Activated CD8-positive, alpha-beta T cell treated with anti-CD3 and anti-CD28 coated beads, Interleukin-2, amount 10 ng/mL, durations not matched to agents 7 days and 5 days (primary cell): ENCODE measurements at regions of chr7 and their contacts with region 1.

Region 1: DNA sequence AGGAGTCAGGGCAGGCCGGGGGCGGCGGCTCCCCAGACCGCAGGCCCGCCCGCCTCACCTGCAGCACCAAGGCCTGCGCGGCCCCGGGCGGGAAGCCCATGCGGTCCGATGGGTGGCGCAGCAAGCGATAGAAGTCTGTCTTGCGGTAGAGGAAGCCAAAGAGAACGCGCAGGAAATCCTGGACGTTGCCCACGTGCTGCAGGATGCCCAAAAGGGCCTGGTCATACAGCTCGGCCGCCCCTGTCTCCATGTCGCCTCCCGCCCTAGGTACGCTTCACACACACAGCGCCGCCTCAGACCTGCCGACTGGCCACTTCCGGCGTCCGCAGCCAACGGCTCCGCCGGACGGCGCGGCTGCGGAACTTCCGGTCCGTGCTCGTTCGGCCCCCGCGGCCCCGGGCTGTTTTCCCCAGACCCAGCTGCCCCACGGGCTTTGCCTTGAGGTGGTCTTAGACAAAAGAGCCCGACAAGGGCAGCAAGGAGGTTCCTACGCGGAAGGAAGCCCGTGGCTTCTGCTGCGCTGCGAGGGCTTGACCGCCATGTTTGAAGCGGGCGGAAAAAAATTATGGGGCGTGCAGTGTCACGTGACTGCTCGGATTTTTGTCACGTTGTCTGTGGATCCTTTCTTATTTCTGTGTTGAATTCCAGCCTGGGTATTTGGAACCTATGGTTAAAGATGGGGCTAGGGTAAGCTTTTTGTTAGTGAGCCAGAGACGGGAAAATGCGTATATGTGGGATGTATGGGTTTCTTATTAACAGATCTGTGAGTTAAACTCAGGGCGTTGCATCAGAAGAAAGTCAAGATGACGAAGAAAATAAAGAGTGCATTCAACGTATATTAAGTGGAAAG is at the start of gene NUDCD3:
- DNase-seq: peak; percentile 89
- ATAC-seq: peak; percentile 84
- H3K4me3 Mint-ChIP-seq: peak within 1 kb of the TSS; percentile 82
- H3K27ac Mint-ChIP-seq: peak within 1 kb of the TSS; percentile 94
- H3K4me1 Mint-ChIP-seq: peaks cover 38% of the 10 kb centered on the region
- H3K27me3 Mint-ChIP-seq: peaks cover 8% of the 10 kb centered on the region
- total RNA-seq, gene NUDCD3: 80.7 to 84.0 TPM

Region 2: GRCh38 chr7:44383566-44383965 is 107.0 kb before region 1 on chr7:
- CTCF ChIA-PET with region 1: no interaction called
- POLR2A ChIA-PET with region 1: no interaction called
- DNase-seq: peak; percentile 14
- ATAC-seq: no peak
- H3K4me3 Mint-ChIP-seq: no peak overlapping the region
- H3K27ac Mint-ChIP-seq: no peak overlapping the region
- H3K4me1 Mint-ChIP-seq: peaks cover 3% of the 10 kb centered on the region
- H3K27me3 Mint-ChIP-seq: no peaks in the 10 kb centered on the region

Region 3: GRCh38 chr7:44460325-44460724 is 30.3 kb before region 1 on chr7:
- CTCF ChIA-PET with region 1: interaction called, 5 read pairs
- POLR2A ChIA-PET with region 1: interaction called, 15 read pairs
- DNase-seq: peak; percentile 87
- ATAC-seq: peak; percentile 95
- H3K4me3 Mint-ChIP-seq: peak overlapping the region; percentile 64
- H3K27ac Mint-ChIP-seq: peak overlapping the region; percentile 50
- H3K4me1 Mint-ChIP-seq: peaks cover 74% of the 10 kb centered on the region
- H3K27me3 Mint-ChIP-seq: no peaks in the 10 kb centered on the region

Region 4: DNA sequence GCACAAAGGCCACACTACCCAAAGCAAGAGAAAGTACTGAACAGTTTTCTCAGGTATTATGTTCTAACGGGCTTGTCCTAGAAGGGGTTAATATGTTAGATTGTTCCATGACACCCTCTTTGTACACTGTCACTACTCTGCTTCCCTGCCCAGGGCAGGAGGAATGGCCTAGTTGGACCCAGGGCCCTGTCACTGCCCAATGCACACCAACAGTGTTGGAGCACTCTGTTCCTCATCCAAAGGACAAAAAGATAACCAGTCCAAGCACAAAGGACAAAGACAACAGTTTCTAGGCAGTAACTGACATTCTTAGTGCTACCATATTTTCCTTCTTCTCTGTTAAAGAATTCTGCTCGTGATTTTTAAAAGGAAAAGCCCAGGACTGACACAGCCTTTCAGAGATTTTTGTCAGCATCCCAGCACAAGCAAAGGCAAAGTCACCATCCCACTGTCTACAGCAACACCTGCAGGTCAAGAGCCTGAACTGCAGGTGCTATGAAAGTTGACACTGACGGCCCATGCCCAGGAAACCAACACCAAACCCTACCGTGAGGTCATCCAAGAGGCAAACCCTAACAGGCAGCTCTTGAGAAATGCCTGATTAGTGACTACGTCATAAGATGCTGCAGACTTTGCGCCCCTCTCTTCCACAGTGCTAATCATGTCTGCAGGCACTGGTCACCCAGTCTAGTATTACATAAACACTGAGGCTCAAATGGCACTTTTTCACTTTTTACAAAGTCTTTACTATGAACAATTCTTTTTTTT is 13.3 kb before region 1 on chr7:
- CTCF ChIA-PET with region 1: interaction called, 16 read pairs
- POLR2A ChIA-PET with region 1: interaction called, 5 read pairs
- DNase-seq: peak; percentile 76
- ATAC-seq: peak; percentile 93
- H3K4me3 Mint-ChIP-seq: no peak overlapping the region
- H3K27ac Mint-ChIP-seq: no peak overlapping the region
- H3K4me1 Mint-ChIP-seq: peaks cover 22% of the 10 kb centered on the region
- H3K27me3 Mint-ChIP-seq: no peaks in the 10 kb centered on the region

Region 5: DNA sequence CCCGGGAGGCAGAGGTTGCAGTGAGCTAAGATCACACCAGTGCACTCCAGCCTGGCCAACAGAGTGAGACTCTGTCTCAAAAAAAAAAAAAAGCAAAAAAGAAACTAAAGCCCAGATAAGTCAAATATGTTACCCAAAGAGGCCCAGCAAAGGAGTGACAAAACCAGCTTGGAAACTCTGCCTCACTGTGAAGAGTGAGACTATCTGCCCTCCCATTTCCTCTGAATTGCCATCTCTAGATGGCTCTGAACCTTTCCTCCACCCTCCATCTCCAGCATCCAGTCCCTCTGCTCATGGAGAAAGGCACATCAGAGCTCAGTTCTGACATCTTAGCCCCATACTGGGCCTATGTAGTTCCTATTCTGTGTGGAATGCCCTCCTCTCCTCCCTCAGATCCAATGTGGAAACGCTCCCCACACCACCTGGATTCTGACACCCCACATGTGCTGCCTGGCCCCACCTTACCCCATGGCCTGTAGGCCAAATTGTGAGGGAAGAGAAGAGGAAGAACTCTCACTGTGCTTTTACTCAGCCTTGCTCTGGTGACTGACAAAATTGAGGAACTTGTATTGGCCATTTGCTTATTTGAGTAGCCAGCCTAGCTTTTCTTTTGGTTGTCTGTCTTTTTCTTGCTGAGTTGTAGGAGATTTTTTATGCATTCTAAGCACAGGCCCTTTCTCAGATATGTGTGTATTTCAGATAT is 17.9 kb after region 1 on chr7:
- CTCF ChIA-PET with region 1: no interaction called
- POLR2A ChIA-PET with region 1: no interaction called
- DNase-seq: no peak
- ATAC-seq: no peak
- H3K4me3 Mint-ChIP-seq: no peak overlapping the region
- H3K27ac Mint-ChIP-seq: no peak overlapping the region
- H3K4me1 Mint-ChIP-seq: no peaks in the 10 kb centered on the region
- H3K27me3 Mint-ChIP-seq: peaks cover 5% of the 10 kb centered on the region